Ovary (tissue), 10 donors: ENCODE measurements at regions of chrX and their contacts with region 1.

Region 1: GRCh38 chrX:110156167-110156754 is 153.3 kb downstream of the TMEM164 start:
- DNase-seq: no peak
- H3K4me3 ChIP-seq: no peak overlapping the region
- H3K27ac ChIP-seq: no peak overlapping the region
- H3K4me1 ChIP-seq: peaks cover 1% of the 10 kb centered on the region
- H3K27me3 ChIP-seq: no peaks in the 10 kb centered on the region
- CTCF ChIP-seq: peak in 1 of 3 donors; percentile 11
- EP300 ChIP-seq: no peak
- POLR2A ChIP-seq: no peak

Region 2: DNA sequence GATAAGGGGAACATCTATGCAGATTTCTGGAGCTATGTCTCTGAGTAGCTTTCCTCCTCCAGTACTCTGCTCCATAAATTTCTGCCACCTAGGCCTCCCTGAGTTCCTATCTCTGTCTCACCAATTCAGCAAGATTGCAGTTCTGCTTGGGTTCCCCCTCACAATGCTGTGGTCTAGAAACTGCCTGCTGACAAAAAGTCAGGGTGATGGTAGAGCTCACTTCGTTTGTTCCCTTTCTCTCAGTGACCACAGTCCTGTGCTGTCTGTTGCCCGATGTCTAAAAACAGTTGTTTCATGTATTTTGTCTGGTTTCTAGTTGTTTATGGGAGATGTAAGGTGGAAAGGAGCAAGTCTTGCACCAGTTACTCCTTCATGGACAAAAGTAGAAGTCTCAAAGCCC is 120.5 kb after region 1 on chrX:
- intact Hi-C with region 1: no loop called
- DNase-seq: no peak
- H3K4me3 ChIP-seq: no peak overlapping the region
- H3K27ac ChIP-seq: no peak overlapping the region
- H3K4me1 ChIP-seq: no peaks in the 10 kb centered on the region
- H3K27me3 ChIP-seq: no peaks in the 10 kb centered on the region
- CTCF ChIP-seq: no peak
- EP300 ChIP-seq: no peak
- POLR2A ChIP-seq: no peak

Region 3: DNA sequence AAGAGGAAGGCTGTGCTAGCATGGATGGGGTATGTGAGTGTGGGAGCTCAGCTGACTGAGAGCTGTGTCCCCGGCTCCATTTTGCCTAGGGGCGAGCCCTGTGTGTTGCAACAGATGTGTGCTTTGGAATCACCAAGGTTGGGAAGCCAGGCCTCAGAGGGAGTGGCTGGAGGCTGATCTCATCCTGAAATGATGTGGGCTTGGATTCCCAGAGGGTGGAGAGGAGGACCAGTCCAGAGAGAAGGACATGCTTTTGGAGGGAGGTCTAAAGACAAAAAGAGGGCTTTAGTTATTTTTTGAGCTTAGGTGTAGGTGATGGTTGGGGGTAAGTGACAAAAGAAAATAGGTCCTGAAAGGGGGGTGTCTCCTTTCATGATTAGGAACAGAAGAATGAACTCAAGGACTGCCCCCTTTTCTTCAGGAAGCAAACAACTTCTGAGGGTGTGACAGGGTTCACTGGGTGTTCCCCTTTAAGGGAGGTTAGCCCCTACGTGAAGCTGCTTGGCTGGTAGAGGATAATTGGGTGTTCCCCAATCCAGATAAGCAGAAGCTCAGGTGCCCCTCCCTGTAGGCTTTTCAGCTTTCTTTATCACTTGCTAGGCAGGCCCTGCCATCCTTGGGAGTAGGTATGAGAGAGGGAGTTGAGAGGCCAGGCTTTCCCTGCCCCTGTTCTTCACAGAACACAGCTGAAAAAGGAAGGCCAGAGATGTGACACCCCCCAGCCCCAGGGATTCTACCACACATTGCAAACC is 246.4 kb after region 1 on chrX:
- intact Hi-C with region 1: loop called in 1 of 4 experiments (anchors 5 kb)
- DNase-seq: peak in 2 of 5 donors; percentile 23 to 61
- H3K4me3 ChIP-seq: no peak overlapping the region
- H3K27ac ChIP-seq: no peak overlapping the region
- H3K4me1 ChIP-seq: no peaks in the 10 kb centered on the region
- H3K27me3 ChIP-seq: no peaks in the 10 kb centered on the region
- CTCF ChIP-seq: no peak
- EP300 ChIP-seq: no peak
- POLR2A ChIP-seq: no peak